Endothelial cell of umbilical vein (primary cell): ENCODE measurements at regions of chr19 and their contacts with region 1.

Region 1: GRCh38 chr19:46924874-46925547 is 64.2 kb downstream of the ARHGAP35 start:
- DNase-seq: peak; percentile 74
- H3K4me3 ChIP-seq: no peak overlapping the region
- H3K27ac ChIP-seq: peak overlapping the region; percentile 73
- H3K4me1 ChIP-seq: peaks cover 25% of the 10 kb centered on the region
- H3K27me3 ChIP-seq: no peaks in the 10 kb centered on the region
- CTCF ChIP-seq: no peak
- POLR2A ChIP-seq: peak; percentile 20

Region 2: DNA sequence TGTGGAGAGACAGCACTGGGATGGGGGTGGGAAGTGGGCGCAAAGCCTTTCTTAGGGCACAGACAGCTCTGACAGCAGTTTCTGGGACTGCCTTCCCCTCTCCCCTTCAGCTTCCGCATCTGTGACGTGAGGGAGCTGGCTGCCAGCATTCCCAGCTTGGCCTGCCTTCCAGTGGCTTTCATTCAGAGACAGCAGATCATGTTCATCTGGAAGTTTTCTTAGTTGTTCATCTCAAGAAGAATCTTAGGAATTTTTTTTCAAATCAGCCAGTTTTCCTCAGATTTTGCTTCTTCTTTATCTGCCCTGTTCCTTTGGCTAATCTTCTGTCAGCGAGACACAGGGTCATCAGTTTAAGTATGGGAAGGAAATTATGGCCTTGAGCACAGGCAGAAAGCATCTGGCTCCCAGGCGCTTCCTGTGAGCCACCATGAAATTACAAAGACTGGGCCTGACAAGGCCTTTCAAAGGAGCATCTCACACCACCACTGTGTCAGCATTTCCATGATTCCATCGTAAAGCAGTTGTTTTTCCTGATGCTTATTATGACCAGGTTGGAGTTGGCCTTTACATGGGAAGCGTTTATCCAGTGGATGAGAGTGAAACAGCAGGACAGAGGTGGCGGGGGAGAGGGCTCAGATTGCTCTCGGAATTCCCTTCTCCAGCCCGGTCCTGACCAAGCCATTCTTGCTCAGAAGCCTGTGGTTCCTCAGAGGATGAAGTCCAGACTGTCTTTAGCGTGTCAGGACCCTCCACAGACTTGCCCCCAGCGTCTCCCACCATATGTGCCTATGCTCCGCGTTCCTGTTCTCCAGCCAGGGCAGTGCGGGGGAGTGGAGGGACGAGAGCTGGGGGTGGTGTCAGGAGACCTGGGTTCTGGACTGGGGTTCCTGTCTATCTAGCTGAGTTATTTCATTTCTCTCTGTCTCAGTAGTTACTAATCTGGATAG is 20.6 kb before region 1 on chr19:
- CTCF ChIA-PET with region 1: interaction called, 11 read pairs
- POLR2A ChIA-PET with region 1: no interaction called
- dilution Hi-C with region 1: no loop called
- intact Hi-C with region 1: no loop called
- DNase-seq: peak; percentile 49
- H3K4me3 ChIP-seq: no peak overlapping the region
- H3K27ac ChIP-seq: peak overlapping the region; percentile 27
- H3K4me1 ChIP-seq: peaks cover 30% of the 10 kb centered on the region
- H3K27me3 ChIP-seq: no peaks in the 10 kb centered on the region
- CTCF ChIP-seq: no peak
- POLR2A ChIP-seq: no peak

Region 3: GRCh38 chr19:46913852-46914430 is 11.1 kb before region 1 on chr19:
- CTCF ChIA-PET with region 1: interaction called, 14 read pairs
- POLR2A ChIA-PET with region 1: no interaction called
- dilution Hi-C with region 1: no loop called
- intact Hi-C with region 1: no loop called
- DNase-seq: peak; percentile 64
- H3K4me3 ChIP-seq: peak overlapping the region in 1 of 3 experiments; percentile 1
- H3K27ac ChIP-seq: peak overlapping the region; percentile 5
- H3K4me1 ChIP-seq: peaks cover 15% of the 10 kb centered on the region
- H3K27me3 ChIP-seq: no peaks in the 10 kb centered on the region
- CTCF ChIP-seq: no peak
- POLR2A ChIP-seq: no peak